Adrenal gland (tissue), 19 donors: ENCODE measurements at regions of chr13 and their contacts with region 1.

Region 1: GRCh38 chr13:102724923-102725322 is 30.1 kb upstream of the METTL21C start:
- DNase-seq: peak in 1 of 7 donors; percentile 5
- H3K4me3 ChIP-seq: no peak overlapping the region
- H3K27ac ChIP-seq: no peak overlapping the region
- H3K4me1 ChIP-seq: peaks cover 0 to 4% of the 10 kb centered on the region in 2 donors
- H3K27me3 ChIP-seq: no peaks in the 10 kb centered on the region
- CTCF ChIP-seq: peak in 5 of 6 experiments; percentile 28 to 51 (median 41)
- POLR2A ChIP-seq: no peak

Region 2: GRCh38 chr13:102580552-102581169 is 144.3 kb before region 1 on chr13:
- intact Hi-C with region 1: loop called in 1 of 2 experiments (anchors 10 kb)
- DNase-seq: peak in 3 of 7 donors; percentile 34 to 54 (median 45)
- H3K4me3 ChIP-seq: no peak overlapping the region
- H3K27ac ChIP-seq: no peak overlapping the region
- H3K4me1 ChIP-seq: no peaks in the 10 kb centered on the region
- H3K27me3 ChIP-seq: no peaks in the 10 kb centered on the region
- CTCF ChIP-seq: peak; percentile 57 to 79 (median 68)
- POLR2A ChIP-seq: no peak